ENCODE measurements at regions of chr21 and their contacts with region 1.

Region 1: DNA sequence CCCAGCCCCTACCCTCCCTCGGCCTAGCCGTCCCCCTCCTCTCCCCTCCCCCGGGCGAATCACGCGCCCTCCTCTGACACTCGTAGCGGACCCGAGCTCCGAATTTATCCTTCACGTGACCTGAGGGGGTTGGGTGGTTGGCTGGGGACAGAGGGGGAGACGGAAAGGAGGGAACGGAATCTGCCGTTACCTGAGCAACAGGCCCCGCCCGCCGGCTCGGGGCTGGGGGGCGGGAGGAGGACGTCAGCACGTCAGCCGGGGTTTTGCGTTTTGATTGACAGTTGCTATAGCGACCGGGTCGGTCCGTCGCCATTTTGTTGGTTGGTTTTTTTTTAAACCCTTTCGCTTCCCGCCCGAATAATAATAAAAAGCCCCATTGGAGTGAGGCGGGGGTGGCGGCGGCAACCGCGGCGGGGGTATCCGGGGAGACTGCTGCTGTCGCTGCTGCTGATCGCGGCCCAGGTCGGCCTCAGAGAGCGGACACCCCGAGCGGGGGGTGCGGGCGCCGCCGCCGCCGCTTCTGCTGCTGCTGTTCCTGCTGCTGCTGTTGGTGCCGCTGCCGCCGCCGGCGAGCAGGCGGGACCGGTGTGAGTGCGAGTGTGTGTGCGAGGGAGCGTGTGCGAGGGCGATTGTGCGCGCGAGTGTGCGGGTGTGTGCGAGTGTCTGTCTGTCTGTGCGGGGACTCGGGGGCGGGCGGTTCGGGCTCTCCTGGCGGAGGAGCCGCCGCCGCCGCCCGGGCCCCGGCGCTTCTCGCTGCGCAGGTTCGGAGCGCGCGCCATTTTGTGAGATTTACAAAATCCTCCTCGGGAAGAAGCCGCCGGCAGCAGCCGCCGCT is at the start of gene DYRK1A:
- DNase-seq: peak; percentile 99
- H3K4me3 Mint-ChIP-seq: peak within 1 kb of the TSS; percentile 99
- H3K27ac Mint-ChIP-seq: peak within 1 kb of the TSS; percentile 100
- H3K4me1 Mint-ChIP-seq: peaks cover 39% of the 10 kb centered on the region
- H3K27me3 Mint-ChIP-seq: peaks cover 3% of the 10 kb centered on the region
- total RNA-seq, gene DYRK1A: 60.9 and 64.9 TPM in 2 replicates

Region 2: DNA sequence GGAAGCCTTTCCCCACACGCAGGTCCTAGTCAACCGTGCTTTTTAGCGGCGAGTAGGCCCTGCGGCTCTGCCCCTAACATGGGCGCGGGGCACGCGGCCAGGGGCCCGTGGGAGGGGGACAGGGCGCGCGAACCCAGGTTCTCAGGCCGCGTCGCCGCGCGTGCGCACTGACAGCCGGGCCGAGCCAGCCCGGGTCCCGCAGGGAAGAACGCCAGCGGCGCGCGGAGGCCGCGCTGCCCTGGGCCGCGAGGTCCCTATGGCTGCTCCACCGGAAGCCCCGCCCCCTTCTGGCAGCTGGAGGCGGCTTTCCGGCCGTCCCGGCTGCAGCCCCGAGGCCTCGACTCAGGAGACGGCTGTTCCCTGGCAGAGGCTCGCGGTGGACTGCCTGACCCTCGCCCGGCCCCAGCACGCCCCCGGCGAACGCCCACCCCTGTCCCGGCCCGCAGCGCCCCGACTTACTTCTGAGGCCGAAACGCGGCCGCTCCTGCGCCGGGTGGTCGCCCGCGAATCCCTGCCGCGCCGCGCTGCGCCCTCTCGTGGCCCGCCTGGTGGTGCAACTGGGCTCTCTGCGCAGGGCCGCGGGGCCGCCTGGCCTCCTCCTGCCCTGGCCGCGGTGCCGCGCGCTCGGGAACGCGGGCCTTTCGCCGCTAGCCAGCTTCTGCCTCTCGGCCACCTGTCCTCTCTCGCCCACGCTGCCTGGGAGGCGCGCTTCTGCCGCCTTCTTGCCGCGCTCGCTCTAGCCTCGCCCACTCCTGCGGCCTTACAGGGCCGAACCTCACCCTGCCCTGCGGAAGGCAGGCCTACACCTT is 376.8 kb before region 1 on chr21:
- intact Hi-C with region 1: loop called (anchors 5 kb)
- DNase-seq: peak; percentile 97
- H3K4me3 Mint-ChIP-seq: peak overlapping the region; percentile 83
- H3K27ac Mint-ChIP-seq: peak overlapping the region; percentile 94
- H3K4me1 Mint-ChIP-seq: peaks cover 33% of the 10 kb centered on the region
- H3K27me3 Mint-ChIP-seq: peaks cover 2% of the 10 kb centered on the region

Region 3: DNA sequence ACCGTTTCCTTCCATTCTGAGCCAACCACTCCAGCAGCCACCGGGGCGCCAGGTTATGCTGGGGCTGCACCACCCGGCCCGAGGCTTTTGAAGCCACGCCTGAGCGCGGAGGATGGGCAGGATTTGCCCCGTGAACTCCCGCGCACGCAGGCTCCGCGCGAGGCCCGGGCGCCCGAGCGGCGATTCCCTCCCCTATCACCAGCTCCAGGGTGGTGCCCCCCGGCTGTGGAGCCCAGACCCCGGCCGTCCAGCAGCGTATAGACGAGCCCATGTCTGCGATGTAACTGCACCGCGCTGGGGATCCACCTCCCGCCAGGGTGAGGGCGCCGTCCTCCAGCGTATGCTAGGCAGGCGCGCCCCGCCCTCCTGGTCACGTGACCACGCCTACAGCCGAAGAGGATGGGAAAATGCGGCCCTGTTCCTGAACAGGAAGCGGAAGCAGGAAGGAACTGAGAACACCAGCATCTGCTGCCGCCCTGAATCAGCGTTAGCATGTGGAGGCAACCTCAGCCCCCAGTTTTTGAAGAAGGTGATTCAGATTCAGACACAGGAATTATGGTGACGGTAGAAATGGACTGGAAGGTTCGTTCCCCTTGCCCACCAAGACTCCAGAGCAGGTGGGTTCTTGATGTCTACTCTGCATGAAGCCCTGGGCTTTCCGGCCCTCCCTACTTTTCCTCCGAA is 145.6 kb before region 1 on chr21:
- intact Hi-C with region 1: loop called (anchors 1 kb)
- DNase-seq: peak; percentile 98
- H3K4me3 Mint-ChIP-seq: peak overlapping the region; percentile 85
- H3K27ac Mint-ChIP-seq: peak overlapping the region; percentile 95
- H3K4me1 Mint-ChIP-seq: peaks cover 43% of the 10 kb centered on the region
- H3K27me3 Mint-ChIP-seq: peaks cover 2% of the 10 kb centered on the region

Region 4: DNA sequence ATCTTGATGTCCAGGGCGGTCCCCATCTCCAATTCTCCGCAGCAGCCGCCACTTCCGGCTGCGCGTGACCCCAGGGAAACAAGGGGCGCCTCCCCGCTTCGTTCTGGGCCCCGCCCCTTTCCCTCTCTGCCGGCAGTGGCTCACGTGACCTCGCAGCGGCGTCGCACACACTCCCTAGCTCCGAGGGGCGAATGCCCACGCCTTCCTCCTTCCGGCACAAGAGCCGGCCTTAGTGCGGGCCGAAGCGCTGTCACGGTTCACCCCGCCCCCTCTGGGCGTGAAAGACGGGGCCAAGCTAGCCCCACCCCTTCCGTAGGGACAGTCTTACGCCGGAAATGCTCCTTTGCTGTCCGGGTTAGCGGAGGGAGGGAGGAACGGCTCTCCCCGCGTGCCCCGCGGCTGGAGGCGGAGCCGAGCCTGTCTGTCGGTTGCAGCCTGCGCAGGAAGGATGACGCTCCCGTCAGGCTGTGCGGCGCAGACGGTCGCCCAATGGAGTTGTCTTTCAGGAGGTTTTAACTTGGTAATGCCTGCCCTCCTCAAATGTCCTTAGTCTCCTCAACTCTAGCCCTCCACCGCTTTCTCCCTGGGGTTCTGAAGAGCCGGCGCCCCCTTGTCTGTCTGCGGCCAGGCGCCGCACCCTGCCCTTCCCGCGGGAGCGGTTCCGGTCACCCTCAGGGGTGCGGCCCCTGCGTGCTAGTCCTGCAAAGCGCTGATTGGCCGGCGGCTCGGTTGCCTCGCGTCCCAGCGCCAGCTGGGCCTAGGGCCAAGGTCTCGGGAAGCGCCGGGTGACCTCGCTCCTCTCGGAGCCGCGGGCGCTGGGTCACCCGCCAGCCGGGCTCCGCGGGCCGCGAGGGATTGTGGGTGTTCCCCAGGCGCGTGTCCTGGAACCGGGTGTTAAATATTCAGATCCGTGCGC is 99.2 kb before region 1 on chr21 and contains the start of gene VPS26C:
- intact Hi-C with region 1: loop called (anchors 1 kb)
- DNase-seq: peak; percentile 100
- H3K4me3 Mint-ChIP-seq: peak within 1 kb of the TSS; percentile 97
- H3K27ac Mint-ChIP-seq: peak within 1 kb of the TSS; percentile 98
- H3K4me1 Mint-ChIP-seq: peaks cover 34% of the 10 kb centered on the region
- H3K27me3 Mint-ChIP-seq: peaks cover 2% of the 10 kb centered on the region
- total RNA-seq, gene VPS26C: 52.8 and 60.0 TPM in 2 replicates

Region 5: DNA sequence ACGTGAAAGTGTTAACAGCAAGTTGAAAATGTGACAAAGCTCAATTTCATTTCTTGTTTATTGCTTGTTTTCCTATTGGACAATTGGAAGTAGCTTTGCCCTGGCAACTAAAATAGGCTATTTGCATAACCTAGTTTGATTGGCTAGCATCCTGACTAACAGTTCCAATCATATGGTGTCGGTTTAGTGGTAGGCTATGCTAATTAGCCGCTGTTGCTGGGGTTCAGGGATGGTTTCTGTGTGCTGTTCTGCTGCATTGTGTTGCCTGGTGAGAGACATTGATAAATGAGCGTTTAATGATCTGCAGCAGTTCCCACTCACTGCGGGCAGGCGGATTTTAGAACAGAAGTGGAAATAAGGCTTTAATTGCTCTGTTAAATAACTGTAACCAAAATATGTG is 68.4 kb after region 1 on chr21:
- intact Hi-C with region 1: loop called (anchors 1 kb)
- DNase-seq: peak; percentile 87
- H3K4me3 Mint-ChIP-seq: no peak overlapping the region
- H3K27ac Mint-ChIP-seq: no peak overlapping the region
- H3K4me1 Mint-ChIP-seq: peaks cover 34% of the 10 kb centered on the region
- H3K27me3 Mint-ChIP-seq: no peaks in the 10 kb centered on the region

Region 6: DNA sequence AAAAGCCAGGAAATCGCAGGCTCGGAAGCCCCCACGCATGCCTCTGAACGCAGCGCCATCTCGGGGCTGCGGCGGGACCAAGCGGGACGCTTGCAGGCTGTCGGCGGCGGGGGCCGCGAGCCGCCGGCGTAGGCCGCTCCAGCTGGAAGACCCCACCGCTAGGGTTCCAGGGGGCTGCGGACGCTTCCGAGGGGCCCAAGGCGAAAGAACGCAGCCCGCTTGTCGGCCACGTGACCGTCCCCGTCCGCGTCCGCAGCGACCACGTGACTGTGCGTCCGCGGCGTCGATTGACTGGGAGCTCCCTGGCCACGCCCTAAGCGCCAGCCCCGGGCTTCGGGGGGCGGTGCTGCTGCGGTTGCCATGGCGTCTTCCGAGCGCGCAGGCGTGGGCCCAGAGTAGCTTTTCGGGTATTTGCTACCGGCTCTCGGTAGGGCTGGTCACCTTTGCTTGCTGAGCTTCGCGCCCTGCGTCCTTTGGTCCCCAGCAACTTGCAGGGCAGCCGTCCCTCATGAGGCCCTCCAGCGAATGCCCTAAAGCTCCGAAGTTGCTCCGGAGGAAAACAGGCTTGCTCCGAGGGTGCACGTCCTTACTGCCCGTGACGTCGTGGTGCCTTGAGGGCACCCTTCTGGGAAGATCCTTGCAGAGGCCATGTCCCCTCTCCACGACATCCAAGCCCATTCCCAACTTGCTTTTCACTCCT is 197.1 kb after region 1 on chr21:
- intact Hi-C with region 1: loop called (anchors 1 kb)
- DNase-seq: peak; percentile 98
- H3K4me3 Mint-ChIP-seq: peak overlapping the region; percentile 94
- H3K27ac Mint-ChIP-seq: peak overlapping the region; percentile 100
- H3K4me1 Mint-ChIP-seq: peaks cover 23% of the 10 kb centered on the region
- H3K27me3 Mint-ChIP-seq: peaks cover 9% of the 10 kb centered on the region